ENCODE measurements at regions of chr16 and their contacts with region 1.

Region 1: DNA sequence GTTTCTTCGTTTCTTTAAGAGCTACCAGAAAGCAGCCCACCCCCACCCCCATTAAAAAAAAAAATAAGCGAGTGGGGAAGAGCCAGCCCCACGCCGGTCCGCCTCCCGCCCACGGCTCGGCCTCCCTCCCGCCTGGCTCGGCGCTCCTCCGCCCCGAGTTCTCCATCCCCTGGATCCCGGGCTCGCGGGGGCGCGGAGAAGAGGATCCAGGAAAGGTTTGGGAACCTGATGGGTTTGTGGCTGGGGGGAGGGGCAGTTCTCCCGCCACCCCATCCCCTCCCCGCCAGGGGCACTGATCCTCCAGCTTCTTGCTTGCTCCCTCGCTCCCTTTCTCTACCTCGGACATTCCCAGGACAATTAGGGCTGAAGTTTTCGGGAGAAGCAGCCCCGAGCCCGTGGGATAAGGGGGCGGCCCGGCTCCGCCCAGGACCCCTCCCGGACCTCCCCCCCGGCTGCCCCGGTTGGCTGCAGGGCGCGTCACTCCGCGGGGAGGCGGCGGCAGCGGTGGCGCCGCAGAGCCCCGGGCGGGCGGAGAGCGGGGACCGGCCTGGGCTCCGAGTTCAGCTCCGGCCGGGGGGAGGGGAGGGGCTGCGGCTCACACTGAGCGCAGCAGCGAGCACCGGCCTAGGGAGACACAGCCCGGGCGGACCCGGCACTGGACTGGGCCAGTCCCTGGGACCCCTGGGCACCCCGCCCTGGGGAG is 1.0 kb upstream of the SALL1 start:
- DNase-seq: no peak
- H3K4me3 Mint-ChIP-seq: no peak overlapping the region
- H3K27ac Mint-ChIP-seq: no peak overlapping the region
- H3K4me1 Mint-ChIP-seq: no peaks in the 10 kb centered on the region
- H3K27me3 Mint-ChIP-seq: peaks cover 66% of the 10 kb centered on the region

Region 2: DNA sequence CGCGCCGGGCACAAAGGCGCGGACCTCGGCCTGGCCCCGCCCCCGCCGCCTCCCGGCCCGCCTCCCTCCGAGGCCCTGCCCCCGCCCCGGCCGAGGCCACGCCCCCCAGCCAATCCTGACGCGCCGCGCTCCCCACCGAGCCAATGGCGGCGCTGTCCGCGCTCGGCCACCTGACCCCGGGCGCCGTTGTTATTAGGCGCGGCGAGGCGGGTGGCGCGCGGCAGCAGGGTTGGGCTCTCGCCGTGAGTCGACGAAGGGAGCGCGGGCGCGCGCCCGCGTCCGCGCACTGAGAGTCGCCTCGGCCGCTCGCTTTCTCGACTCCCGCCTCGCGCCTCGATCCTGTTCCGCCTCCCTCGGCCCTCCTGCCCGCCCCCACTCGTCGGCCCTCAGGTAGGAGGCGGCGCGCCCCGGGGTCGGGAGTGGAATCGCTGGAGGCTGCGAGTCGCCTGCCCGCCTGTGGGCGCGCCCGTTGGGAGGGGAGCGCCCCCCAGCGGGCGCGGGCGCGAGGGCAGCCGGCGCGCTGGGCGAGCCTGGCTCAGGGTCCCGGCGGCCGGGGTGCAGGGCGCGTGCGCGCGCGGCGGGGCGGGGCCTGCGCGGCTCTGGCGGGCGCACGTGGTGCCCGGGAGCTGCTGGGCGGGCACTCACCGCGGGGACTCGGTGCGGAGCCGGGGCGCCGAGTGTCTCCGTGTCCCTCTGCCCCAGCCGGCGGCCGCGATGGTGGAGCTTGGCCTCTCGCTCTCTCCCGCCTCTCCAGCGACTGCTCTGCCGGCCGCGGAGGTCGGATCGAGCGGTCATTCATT is 1870.1 kb before region 1 on chr16:
- intact Hi-C with region 1: loop called (anchors 10 kb)
- DNase-seq: peak; percentile 44
- H3K4me3 Mint-ChIP-seq: peak overlapping the region; percentile 60
- H3K27ac Mint-ChIP-seq: no peak overlapping the region
- H3K4me1 Mint-ChIP-seq: no peaks in the 10 kb centered on the region
- H3K27me3 Mint-ChIP-seq: peaks cover 61% of the 10 kb centered on the region

Region 3: DNA sequence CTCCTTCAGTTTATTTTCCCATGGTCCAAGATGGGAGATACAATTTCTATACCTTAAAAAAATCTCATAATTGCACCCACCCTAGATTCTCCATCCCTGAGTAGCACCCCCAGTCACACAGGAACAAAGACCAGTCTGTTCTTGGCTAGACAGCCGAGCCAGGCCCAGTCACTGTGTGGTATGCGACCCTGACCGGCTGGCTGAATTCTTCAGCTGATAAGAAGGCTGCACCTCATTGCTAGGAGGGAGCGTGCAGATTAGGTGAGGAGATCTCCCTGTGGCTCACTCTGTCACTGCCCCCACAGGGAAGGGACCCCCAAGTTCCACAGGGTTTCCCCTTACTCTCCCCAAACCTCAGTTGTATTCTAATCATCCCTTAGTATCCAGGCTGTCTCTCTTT is 139.7 kb before region 1 on chr16:
- intact Hi-C with region 1: no loop called
- DNase-seq: no peak
- H3K4me3 Mint-ChIP-seq: no peak overlapping the region
- H3K27ac Mint-ChIP-seq: no peak overlapping the region
- H3K4me1 Mint-ChIP-seq: no peaks in the 10 kb centered on the region
- H3K27me3 Mint-ChIP-seq: peaks cover under 1% of the 10 kb centered on the region